CD4-positive, alpha-beta memory T cell (primary cell): ENCODE measurements at regions of chr20 and their contacts with region 1.

Region 1: DNA sequence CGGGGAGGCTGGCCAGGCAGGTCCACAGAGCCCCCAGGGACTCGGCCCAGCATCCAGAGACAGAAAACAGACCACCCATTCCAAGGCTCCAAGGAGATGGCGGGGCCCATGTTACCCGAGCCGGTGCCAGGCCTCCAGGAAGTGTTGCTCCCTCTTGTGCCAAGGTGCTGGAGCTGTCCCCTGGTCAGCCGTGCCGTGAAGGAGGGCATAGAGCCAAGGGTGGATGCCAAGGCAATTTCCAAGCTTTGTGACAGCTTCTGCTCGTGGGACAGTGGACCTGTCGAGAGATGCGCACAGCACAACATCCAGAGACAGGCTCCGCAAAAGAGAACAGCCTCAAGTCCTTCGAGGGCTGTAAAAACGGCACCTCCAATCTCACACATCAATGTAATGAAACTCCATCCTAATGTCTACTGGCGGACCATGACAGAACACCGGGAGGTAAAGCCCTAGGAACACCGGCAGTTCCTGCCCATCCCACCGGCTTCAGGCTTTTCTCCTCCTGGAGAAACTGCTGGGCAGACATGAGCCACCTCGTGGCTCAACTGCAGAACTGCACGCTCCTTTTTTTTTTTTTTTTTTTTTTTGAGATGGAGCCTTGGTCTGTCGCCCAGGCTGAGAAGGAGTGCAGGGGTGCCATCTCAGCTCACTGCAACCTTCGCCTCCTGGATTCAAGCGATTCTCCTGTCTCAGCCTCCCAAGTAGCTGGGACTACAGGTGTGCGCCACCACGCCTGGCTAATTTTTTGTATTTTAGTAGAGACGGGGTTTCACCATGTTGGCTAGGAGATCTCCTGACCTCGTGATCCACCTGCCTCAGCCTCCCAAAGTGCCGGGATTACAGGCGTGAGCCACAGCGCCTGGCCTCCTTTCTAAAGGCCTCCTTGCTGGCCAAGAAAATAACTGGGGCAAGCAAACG is 30.9 kb upstream of the AVP start:
- DNase-seq: peak in 4 of 5 donors; percentile 27 to 43 (median 34)
- H3K4me3 ChIP-seq: no peak overlapping the region
- H3K4me3 Mint-ChIP-seq: no peak overlapping the region
- H3K27ac ChIP-seq: no peak overlapping the region
- H3K27ac Mint-ChIP-seq: peak overlapping the region in 4 of 7 donors; percentile 62 to 81 (median 66)
- H3K4me1 ChIP-seq: peaks cover 6% of the 10 kb centered on the region
- H3K4me1 Mint-ChIP-seq: peaks cover 5 to 34% (median 8%) of the 10 kb centered on the region in 4 donors
- H3K27me3 ChIP-seq: no peaks in the 10 kb centered on the region
- H3K27me3 Mint-ChIP-seq: no peaks in the 10 kb centered on the region

Region 2: GRCh38 chr20:3068986-3069900 is 46.2 kb before region 1 on chr20:
- CTCF ChIA-PET with region 1: interaction called, 20 read pairs
- POLR2A ChIA-PET with region 1: no interaction called
- intact Hi-C with region 1: loop called (anchors 1 kb)
- DNase-seq: peak in 4 of 5 donors; percentile 19 to 37 (median 27)
- H3K4me3 ChIP-seq: no peak overlapping the region
- H3K4me3 Mint-ChIP-seq: peak overlapping the region in 1 of 8 donors; percentile 43
- H3K27ac ChIP-seq: no peak overlapping the region
- H3K27ac Mint-ChIP-seq: peak overlapping the region in 1 of 7 donors; percentile 72
- H3K4me1 ChIP-seq: peaks cover 18% of the 10 kb centered on the region
- H3K4me1 Mint-ChIP-seq: peaks cover 16 to 20% (median 17%) of the 10 kb centered on the region in 4 donors
- H3K27me3 ChIP-seq: no peaks in the 10 kb centered on the region
- H3K27me3 Mint-ChIP-seq: no peaks in the 10 kb centered on the region

Region 3: GRCh38 chr20:3092611-3093379 is 22.7 kb before region 1 on chr20:
- CTCF ChIA-PET with region 1: interaction called, 7 read pairs
- POLR2A ChIA-PET with region 1: interaction called, 4 read pairs
- intact Hi-C with region 1: loop called (anchors 2 kb)
- DNase-seq: peak; percentile 26 to 54 (median 40)
- H3K4me3 ChIP-seq: no peak overlapping the region
- H3K4me3 Mint-ChIP-seq: peak overlapping the region; percentile 86 to 93 (median 91)
- H3K27ac ChIP-seq: peak overlapping the region; percentile 39
- H3K27ac Mint-ChIP-seq: peak overlapping the region; percentile 88 to 98 (median 94)
- H3K4me1 ChIP-seq: peaks cover 16% of the 10 kb centered on the region
- H3K4me1 Mint-ChIP-seq: peaks cover 9 to 26% (median 12%) of the 10 kb centered on the region in 4 donors
- H3K27me3 ChIP-seq: peaks cover 6% of the 10 kb centered on the region
- H3K27me3 Mint-ChIP-seq: peaks cover 4 to 21% of the 10 kb centered on the region in 2 donors

Region 4: GRCh38 chr20:3316136-3316535 is 200.7 kb after region 1 on chr20:
- CTCF ChIA-PET with region 1: interaction called, 5 read pairs
- POLR2A ChIA-PET with region 1: no interaction called
- intact Hi-C with region 1: loop called (anchors 1 kb)
- DNase-seq: no peak
- H3K4me3 ChIP-seq: no peak overlapping the region
- H3K4me3 Mint-ChIP-seq: no peak overlapping the region
- H3K27ac ChIP-seq: no peak overlapping the region
- H3K27ac Mint-ChIP-seq: peak overlapping the region in 1 of 7 donors; percentile 23
- H3K4me1 ChIP-seq: no peaks in the 10 kb centered on the region
- H3K4me1 Mint-ChIP-seq: no peaks in the 10 kb centered on the region
- H3K27me3 ChIP-seq: no peaks in the 10 kb centered on the region
- H3K27me3 Mint-ChIP-seq: no peaks in the 10 kb centered on the region